Sciatic nerve (tissue), 2 donors: ENCODE measurements at regions of chr6 and their contacts with region 1.

Region 1: GRCh38 chr6:97053643-97054411 is 129.3 kb downstream of the KLHL32 start:
- DNase-seq: no peak
- ATAC-seq: no peak

Region 2: GRCh38 chr6:96897383-96898240 is 156.2 kb before region 1 on chr6 and contains the start of gene NDUFAF4:
- intact Hi-C with region 1: loop called (anchors 2 kb)
- DNase-seq: peak; percentile 98
- ATAC-seq: peak; percentile 99
- total RNA-seq, gene NDUFAF4: 23.3 TPM

Region 3: DNA sequence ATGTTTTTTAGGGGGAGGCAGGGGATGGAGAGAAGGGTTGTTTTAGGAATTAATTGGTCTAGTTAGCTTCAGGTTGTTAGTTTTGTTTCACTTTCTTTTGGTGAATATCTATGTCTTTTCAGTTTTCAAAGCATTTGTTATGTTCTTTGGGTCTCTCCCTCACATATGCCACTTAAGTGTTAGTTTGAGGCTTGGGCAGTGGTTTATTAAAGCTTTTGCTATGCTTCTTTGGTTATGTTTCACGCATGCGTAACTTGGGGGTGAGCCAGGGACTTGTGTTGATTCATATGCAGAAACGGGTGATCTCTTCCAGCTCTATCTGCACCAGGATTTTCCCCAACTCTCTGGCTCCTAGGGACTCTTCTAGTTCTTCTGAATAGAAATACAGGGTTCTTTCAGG is 240.6 kb after region 1 on chr6:
- intact Hi-C with region 1: no loop called
- DNase-seq: no peak
- ATAC-seq: no peak